ENCODE measurements at regions of chr6 and their contacts with region 1.

Region 1: GRCh38 chr6:71083308-71083820 is 126.5 kb upstream of the B3GAT2 start:
- DNase-seq: no peak
- ATAC-seq: no peak

Region 2: DNA sequence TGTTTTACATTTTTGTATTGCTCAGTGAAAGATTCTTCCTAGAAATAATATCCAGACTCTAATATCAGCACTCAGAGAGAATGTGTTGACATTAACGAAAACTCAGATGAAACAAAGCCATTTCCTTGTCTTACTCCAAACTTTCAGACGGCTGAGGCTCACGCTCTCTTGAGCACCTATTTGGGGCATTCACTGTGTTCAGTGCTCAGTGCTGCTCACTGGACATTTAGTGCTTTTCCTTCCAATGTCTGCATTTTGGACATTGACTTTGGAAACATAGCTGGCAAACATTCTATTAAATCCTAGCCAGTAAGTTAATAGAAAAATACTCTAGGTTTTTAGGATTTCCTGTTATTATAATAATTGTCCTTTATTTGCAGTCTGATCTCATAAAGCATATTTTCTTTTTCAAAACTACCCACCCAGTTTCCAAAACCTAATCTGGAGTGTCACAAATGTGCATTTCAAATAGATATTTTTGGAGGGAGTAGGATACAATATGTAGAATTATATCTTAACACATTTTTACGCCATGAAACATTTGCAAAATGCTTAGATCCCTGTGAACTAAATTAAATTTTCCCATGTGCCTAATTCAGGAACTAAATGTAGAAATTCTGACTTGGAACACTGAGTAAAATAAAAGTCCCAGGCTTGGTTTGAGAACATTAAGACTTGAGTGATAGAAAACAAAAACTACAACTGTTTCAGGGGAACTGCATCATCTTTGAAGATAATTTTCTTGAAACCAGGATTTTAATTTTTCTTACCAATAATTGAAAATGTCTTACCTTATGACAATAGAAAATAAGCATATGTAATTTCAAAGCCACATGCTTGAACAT is 34.8 kb before region 1 on chr6:
- intact Hi-C with region 1: loop called (anchors 1 kb)
- DNase-seq: no peak
- ATAC-seq: no peak

Region 3: GRCh38 chr6:71190809-71191208 is 107.4 kb after region 1 on chr6:
- intact Hi-C with region 1: no loop called
- DNase-seq: no peak
- ATAC-seq: no peak